ENCODE measurements at regions of chr1 and their contacts with region 1.

Region 1: GRCh38 chr1:165768513-165769394 is at the start of gene TMCO1:
- DNase-seq: peak; percentile 91 to 94 (median 92)
- H3K4me3 ChIP-seq: peak within 1 kb of the TSS; percentile 60
- H3K27ac ChIP-seq: peak within 1 kb of the TSS; percentile 1 to 78
- H3K4me1 ChIP-seq: peaks cover 7% of the 10 kb centered on the region
- H3K27me3 ChIP-seq: no peaks in the 10 kb centered on the region
- CTCF ChIP-seq: no peak
- EP300 ChIP-seq: no peak
- POLR2A ChIP-seq: peak; percentile 45
- total RNA-seq, gene TMCO1: 38.5 to 77.7 (median 58.5) TPM

Region 2: GRCh38 chr1:165827268-165828102 is 58.7 kb after region 1 on chr1 and contains the start of gene UCK2:
- intact Hi-C with region 1: loop called in 1 of 4 experiments (anchors 10 kb)
- DNase-seq: peak; percentile 60 to 77 (median 71)
- H3K4me3 ChIP-seq: peak within 1 kb of the TSS; percentile 89
- H3K27ac ChIP-seq: peak within 1 kb of the TSS; percentile 82 to 84
- H3K4me1 ChIP-seq: no peaks in the 10 kb centered on the region
- H3K27me3 ChIP-seq: no peaks in the 10 kb centered on the region
- CTCF ChIP-seq: peak in 1 of 3 donors; percentile 28
- EP300 ChIP-seq: no peak
- POLR2A ChIP-seq: no peak
- total RNA-seq, gene UCK2: 13.2 to 22.7 (median 17.1) TPM

Measured in ovary (tissue), 10 donors.